Heart left ventricle (tissue), 16 donors: ENCODE measurements at regions of chr13 and their contacts with region 1.

Region 1: DNA sequence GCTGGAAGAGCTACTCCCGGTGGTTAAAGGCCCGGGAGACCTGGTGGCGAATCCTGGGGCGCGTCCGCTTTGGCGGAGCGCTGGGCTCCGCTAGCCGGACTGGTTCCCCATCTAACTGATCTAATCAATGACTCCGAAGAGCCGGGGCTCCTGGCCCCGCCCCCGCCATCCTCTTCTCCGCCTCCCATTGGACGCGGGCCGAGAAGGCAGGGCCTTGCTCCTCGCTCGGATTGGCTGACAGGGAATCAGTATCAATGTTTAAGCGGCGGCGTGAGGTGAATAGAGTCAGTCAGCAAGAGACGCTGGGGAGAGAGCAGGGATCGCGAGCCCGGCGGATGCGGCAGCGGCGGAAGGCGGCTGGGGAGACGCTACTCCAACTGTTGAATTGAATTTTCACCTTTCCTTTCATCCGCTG is 1.7 kb upstream of the PCDH17 start:
- DNase-seq: peak; percentile 89 to 93 (median 91)
- ATAC-seq: peak; percentile 78 to 83 (median 82)
- H3K4me3 ChIP-seq: peak overlapping the region; percentile 43 to 79 (median 65)
- H3K27ac ChIP-seq: peak overlapping the region in 4 of 12 donors; percentile 25 to 77 (median 76)
- H3K4me1 ChIP-seq: peaks cover 0 to 33% (median 0%) of the 10 kb centered on the region in 12 donors
- H3K27me3 ChIP-seq: peaks cover 0 to 65% (median 31%) of the 10 kb centered on the region in 9 donors
- CTCF ChIP-seq: no peak
- POLR2A ChIP-seq: peak; percentile 72 to 98

Region 2: GRCh38 chr13:57682128-57682716 is 52.4 kb after region 1 on chr13:
- intact Hi-C with region 1: no loop called
- DNase-seq: no peak
- ATAC-seq: no peak
- H3K4me3 ChIP-seq: no peak overlapping the region
- H3K27ac ChIP-seq: no peak overlapping the region
- H3K4me1 ChIP-seq: no peaks in the 10 kb centered on the region
- H3K27me3 ChIP-seq: no peaks in the 10 kb centered on the region
- CTCF ChIP-seq: no peak
- POLR2A ChIP-seq: no peak

Region 3: GRCh38 chr13:57704031-57704430 is 74.2 kb after region 1 on chr13:
- intact Hi-C with region 1: no loop called
- DNase-seq: no peak
- ATAC-seq: no peak
- H3K4me3 ChIP-seq: no peak overlapping the region
- H3K27ac ChIP-seq: no peak overlapping the region
- H3K4me1 ChIP-seq: no peaks in the 10 kb centered on the region
- H3K27me3 ChIP-seq: no peaks in the 10 kb centered on the region
- CTCF ChIP-seq: no peak
- POLR2A ChIP-seq: no peak

Region 4: DNA sequence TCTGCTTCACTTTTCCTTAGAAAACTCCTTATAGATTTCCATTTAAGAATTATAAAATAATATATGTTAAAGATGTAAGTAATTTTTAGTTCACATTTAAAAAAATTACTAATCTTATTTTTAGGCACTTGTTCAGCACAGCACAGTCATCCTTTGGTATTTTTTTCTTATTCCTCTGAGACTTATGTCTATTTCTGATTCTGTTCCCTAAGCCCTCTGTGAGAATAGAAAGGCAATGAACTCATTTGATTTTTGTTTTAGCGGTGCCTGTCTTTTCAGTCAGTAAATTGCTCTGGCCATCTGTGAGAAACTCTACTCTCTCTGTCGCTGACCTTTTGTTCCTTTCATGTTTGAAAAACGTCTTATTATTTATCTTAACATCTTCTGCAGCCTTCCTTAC is 169.8 kb after region 1 on chr13:
- intact Hi-C with region 1: loop called in 2 of 10 experiments (anchors 5 to 10 kb)
- DNase-seq: no peak
- ATAC-seq: no peak
- H3K4me3 ChIP-seq: no peak overlapping the region
- H3K27ac ChIP-seq: no peak overlapping the region
- H3K4me1 ChIP-seq: no peaks in the 10 kb centered on the region
- H3K27me3 ChIP-seq: no peaks in the 10 kb centered on the region
- CTCF ChIP-seq: no peak
- POLR2A ChIP-seq: no peak

Region 5: GRCh38 chr13:57837801-57838200 is 208.0 kb after region 1 on chr13:
- intact Hi-C with region 1: no loop called
- DNase-seq: no peak
- ATAC-seq: no peak
- H3K4me3 ChIP-seq: no peak overlapping the region
- H3K27ac ChIP-seq: no peak overlapping the region
- H3K4me1 ChIP-seq: no peaks in the 10 kb centered on the region
- H3K27me3 ChIP-seq: no peaks in the 10 kb centered on the region
- CTCF ChIP-seq: no peak
- POLR2A ChIP-seq: no peak

Region 6: DNA sequence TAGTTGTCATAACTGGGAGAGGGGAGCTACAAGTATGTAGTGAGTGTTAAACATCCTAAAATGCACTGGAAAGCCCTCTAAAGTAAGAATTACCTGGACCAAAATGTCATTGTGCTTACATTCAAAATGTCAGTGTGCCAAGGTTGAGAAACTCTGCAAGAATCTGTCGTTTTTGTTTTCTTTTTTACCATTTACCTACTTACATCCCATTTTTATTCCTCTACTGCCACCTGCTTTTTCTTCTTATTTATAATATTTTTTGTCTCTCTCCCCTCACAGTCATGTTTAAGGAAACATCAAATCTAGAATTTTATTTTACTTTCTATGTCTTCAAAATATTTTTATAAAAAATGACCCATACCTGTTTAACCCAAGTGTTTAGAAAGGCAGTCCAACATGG is 228.1 kb after region 1 on chr13:
- intact Hi-C with region 1: loop called (anchors 1 to 10 kb)
- DNase-seq: no peak
- ATAC-seq: no peak
- H3K4me3 ChIP-seq: no peak overlapping the region
- H3K27ac ChIP-seq: no peak overlapping the region
- H3K4me1 ChIP-seq: no peaks in the 10 kb centered on the region
- H3K27me3 ChIP-seq: no peaks in the 10 kb centered on the region
- CTCF ChIP-seq: peak in 7 of 12 donors; percentile 14 to 43 (median 33)
- POLR2A ChIP-seq: no peak

Region 7: GRCh38 chr13:58773280-58773859 is 1143.5 kb after region 1 on chr13:
- intact Hi-C with region 1: loop called in 1 of 10 experiments (anchors 5 kb)
- DNase-seq: no peak
- ATAC-seq: no peak
- H3K4me3 ChIP-seq: no peak overlapping the region
- H3K27ac ChIP-seq: no peak overlapping the region
- H3K4me1 ChIP-seq: peaks cover 0 to 2% (median 0%) of the 10 kb centered on the region in 12 donors
- H3K27me3 ChIP-seq: no peaks in the 10 kb centered on the region
- CTCF ChIP-seq: no peak
- POLR2A ChIP-seq: no peak

Region 8: DNA sequence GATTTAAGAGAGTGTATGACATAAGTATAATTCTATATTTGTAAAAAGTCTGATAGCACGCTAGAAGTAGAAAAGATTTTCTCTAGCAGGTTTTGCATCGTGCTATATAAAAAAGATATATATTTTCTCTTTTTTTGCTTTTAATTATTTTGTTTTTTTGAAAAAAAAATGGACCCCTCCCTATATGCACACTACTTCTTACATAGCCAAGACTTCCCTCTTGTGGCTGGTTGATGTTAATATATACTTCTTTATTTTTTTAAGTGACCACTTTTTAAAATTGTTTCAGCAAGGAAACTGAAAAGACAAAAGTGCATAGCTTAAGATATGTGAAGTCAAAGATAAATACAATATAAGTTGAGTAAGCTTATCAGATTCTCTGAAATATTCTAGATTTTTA is 1331.1 kb after region 1 on chr13:
- intact Hi-C with region 1: loop called in 3 of 10 experiments (anchors 5 to 10 kb)
- DNase-seq: no peak
- ATAC-seq: no peak
- H3K4me3 ChIP-seq: no peak overlapping the region
- H3K27ac ChIP-seq: no peak overlapping the region
- H3K4me1 ChIP-seq: no peaks in the 10 kb centered on the region
- H3K27me3 ChIP-seq: no peaks in the 10 kb centered on the region
- CTCF ChIP-seq: peak in 9 of 12 donors; percentile 10 to 49 (median 25)
- POLR2A ChIP-seq: no peak